Panc1 (cell line): ENCODE measurements at regions of chr15 and their contacts with region 1.

Region 1: DNA sequence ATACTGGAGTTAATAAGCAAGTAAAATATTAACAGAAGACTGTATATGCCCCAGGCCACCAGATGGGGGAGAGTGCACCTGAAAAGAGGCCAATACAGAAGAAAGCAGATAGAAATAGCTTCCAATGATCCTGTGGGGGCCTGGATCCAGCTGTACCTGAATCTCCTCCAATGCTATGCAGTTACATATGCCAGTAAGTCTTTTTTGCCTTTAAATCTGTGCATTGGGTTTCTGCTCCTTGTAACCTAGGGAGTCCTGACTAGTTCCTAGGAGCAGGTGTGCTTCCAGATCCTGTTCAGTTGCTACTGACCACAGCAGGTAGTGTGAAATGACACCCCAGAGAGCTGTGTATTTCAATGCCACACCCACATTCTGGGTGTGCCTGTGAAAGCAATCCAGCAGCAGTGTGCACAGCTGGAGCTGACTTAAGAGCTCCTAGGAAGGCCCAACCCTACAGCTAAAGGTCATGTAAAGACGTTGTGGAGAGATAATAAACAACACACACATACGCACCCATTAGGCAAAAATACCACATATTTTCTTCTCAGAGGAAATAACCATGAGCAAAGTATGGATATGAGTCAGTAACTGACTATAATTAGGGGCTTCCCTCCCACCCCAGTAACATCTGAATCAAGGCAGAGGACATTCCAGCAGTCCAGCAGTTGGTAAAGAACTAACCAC is 62.2 kb upstream of the AKAP13 start:
- DNase-seq: no peak
- ATAC-seq: peak; percentile 86
- H3K4me3 ChIP-seq: no peak overlapping the region
- H3K27ac ChIP-seq: no peak overlapping the region
- H3K4me1 ChIP-seq: no peaks in the 10 kb centered on the region
- H3K27me3 ChIP-seq: no peaks in the 10 kb centered on the region
- CTCF ChIP-seq: peak; percentile 33

Region 2: GRCh38 chr15:85306946-85307708 is 11.1 kb before region 1 on chr15:
- CTCF ChIA-PET with region 1: no interaction called
- POLR2A ChIA-PET with region 1: no interaction called
- in situ Hi-C with region 1: no loop called
- intact Hi-C with region 1: no loop called
- DNase-seq: no peak
- ATAC-seq: no peak
- H3K4me3 ChIP-seq: no peak overlapping the region
- H3K27ac ChIP-seq: no peak overlapping the region
- H3K4me1 ChIP-seq: no peaks in the 10 kb centered on the region
- H3K27me3 ChIP-seq: no peaks in the 10 kb centered on the region
- CTCF ChIP-seq: no peak

Region 3: GRCh38 chr15:85334241-85334640 is 16.1 kb after region 1 on chr15:
- CTCF ChIA-PET with region 1: no interaction called
- POLR2A ChIA-PET with region 1: no interaction called
- in situ Hi-C with region 1: no loop called
- intact Hi-C with region 1: no loop called
- DNase-seq: no peak
- ATAC-seq: no peak
- H3K4me3 ChIP-seq: no peak overlapping the region
- H3K27ac ChIP-seq: peak overlapping the region; percentile 26; the same call in 1 of the 2 replicates
- H3K4me1 ChIP-seq: peaks cover 49% of the 10 kb centered on the region
- H3K27me3 ChIP-seq: no peaks in the 10 kb centered on the region
- CTCF ChIP-seq: no peak

Region 4: GRCh38 chr15:85494048-85494793 is 176.0 kb after region 1 on chr15:
- CTCF ChIA-PET with region 1: no interaction called
- POLR2A ChIA-PET with region 1: interaction called, 12 read pairs
- in situ Hi-C with region 1: no loop called
- intact Hi-C with region 1: no loop called
- DNase-seq: peak; percentile 81
- ATAC-seq: peak; percentile 86
- H3K4me3 ChIP-seq: no peak overlapping the region
- H3K27ac ChIP-seq: no peak overlapping the region
- H3K4me1 ChIP-seq: peaks cover 15% of the 10 kb centered on the region
- H3K27me3 ChIP-seq: no peaks in the 10 kb centered on the region
- CTCF ChIP-seq: no peak

Region 5: GRCh38 chr15:85559530-85559929 is 241.3 kb after region 1 on chr15:
- CTCF ChIA-PET with region 1: interaction called, 14 read pairs
- POLR2A ChIA-PET with region 1: no interaction called
- in situ Hi-C with region 1: no loop called
- intact Hi-C with region 1: no loop called
- DNase-seq: no peak
- ATAC-seq: no peak
- H3K4me3 ChIP-seq: no peak overlapping the region
- H3K27ac ChIP-seq: no peak overlapping the region
- H3K4me1 ChIP-seq: no peaks in the 10 kb centered on the region
- H3K27me3 ChIP-seq: no peaks in the 10 kb centered on the region
- CTCF ChIP-seq: no peak